ENCODE measurements at regions of chr1 and their contacts with region 1.

Region 1: GRCh38 chr1:233240829-233241682 is 54.5 kb downstream of the PCNX2 start:
- DNase-seq: peak; percentile 64 to 66
- H3K4me3 ChIP-seq: no peak overlapping the region
- H3K4me3 Mint-ChIP-seq: peak overlapping the region; percentile 33
- H3K27ac Mint-ChIP-seq: peak overlapping the region; percentile 35
- H3K4me1 ChIP-seq: peaks cover 47% of the 10 kb centered on the region
- H3K4me1 Mint-ChIP-seq: peaks cover 25% of the 10 kb centered on the region
- H3K27me3 ChIP-seq: no peaks in the 10 kb centered on the region
- H3K27me3 Mint-ChIP-seq: no peaks in the 10 kb centered on the region
- CTCF ChIP-seq: peak; percentile 57 to 83

Region 2: DNA sequence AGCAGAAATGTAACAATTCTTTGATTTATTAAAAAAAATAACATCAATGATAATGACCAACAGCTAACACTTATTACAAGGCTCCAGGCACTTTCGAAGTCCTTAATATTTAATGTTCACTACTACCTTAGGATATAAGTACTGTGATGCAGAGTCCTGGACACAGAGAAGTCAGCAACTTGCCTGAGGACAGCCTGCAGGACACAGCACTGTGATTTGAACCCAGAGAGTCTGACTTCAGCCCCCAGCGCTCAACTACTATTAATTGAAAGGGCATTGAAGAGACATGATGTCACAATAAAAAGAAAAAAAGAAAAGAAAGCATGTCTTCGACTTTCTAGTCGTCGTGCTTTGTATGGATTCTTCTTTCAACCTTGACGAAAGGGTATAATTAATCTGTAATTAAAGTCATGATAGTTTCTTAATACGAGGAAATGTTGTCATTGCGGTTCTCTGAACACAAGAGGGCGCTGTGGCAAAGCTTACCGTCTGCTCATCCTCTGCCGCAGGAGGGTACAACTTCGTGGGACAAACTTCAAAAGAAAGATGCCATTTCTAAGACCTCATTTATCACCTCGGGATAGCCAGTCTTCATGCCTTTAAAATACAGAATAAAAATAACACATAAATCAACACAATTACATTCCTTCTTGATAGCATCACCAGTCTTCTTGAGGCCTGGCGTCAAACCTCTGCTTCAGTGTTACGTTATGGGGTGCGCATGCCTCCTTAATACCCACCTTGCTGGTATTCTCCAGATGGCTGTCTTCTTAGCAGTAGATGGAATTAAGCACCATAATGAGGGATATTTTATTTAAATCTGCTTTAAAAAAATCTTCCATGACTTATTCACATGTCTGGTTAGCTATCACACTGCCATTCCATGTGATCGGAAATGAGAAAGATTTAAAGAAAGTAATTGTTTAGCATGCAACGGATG is 1374.4 kb before region 1 on chr1:
- CTCF ChIA-PET with region 1: interaction called, 4 read pairs
- POLR2A ChIA-PET with region 1: no interaction called
- intact Hi-C with region 1: loop called (anchors 5 kb)
- DNase-seq: peak; percentile 41 to 54
- H3K4me3 ChIP-seq: no peak overlapping the region
- H3K4me3 Mint-ChIP-seq: no peak overlapping the region
- H3K27ac Mint-ChIP-seq: no peak overlapping the region
- H3K4me1 ChIP-seq: no peaks in the 10 kb centered on the region
- H3K4me1 Mint-ChIP-seq: no peaks in the 10 kb centered on the region
- H3K27me3 ChIP-seq: no peaks in the 10 kb centered on the region
- H3K27me3 Mint-ChIP-seq: no peaks in the 10 kb centered on the region
- CTCF ChIP-seq: peak; percentile 80 to 93

Region 3: DNA sequence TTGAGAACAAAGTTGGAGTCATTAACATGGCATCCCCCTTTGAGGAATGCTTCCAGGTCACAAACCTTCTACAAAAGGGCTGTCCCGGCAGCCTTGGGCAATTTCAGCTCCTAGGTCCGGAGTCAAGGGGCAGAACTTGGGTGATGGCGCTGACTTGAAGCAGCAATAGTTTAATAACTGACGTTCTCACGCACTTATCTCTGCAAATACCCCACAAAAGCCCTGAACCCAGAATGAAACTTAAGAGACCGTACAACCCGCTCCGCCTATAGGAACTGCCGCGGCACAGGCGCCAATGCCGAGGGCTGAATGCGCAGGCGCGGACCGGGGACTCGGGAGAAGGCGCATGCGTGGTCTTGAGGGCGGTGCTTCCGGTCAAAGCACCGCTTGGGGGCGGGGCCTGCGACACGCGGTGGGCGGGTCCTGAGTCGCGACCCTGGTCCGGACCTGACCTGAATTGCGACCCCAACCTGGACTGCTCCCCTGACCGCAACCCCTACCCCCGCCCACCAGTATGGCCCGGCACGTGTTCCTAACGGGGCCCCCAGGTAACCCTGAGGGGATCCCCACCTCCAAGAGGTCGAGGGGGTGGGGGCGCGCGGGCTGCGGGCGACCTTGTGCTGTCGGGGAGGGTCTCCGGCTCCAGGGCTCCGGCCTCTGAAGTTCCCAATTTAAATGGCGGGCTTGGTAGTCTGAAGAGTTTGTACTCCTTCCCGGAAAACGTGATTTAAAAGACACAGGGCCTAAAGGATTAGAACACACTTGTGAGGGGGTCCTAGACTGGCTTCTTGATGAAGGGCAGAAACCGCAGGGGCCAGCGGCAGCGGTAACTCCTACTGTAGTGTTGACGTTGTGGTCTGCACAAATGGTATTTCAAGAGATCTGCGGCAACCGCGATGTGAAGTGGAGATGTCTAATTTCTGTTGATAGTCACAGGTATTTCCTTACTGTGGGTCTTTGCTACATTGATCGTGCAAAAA is 290.6 kb before region 1 on chr1 and contains the start of gene NTPCR:
- CTCF ChIA-PET with region 1: no interaction called
- POLR2A ChIA-PET with region 1: no interaction called
- intact Hi-C with region 1: loop called (anchors 1 kb)
- DNase-seq: peak; percentile 93 to 97
- H3K4me3 ChIP-seq: peak within 1 kb of the TSS; percentile 97
- H3K4me3 Mint-ChIP-seq: peak within 1 kb of the TSS; percentile 95
- H3K27ac Mint-ChIP-seq: peak within 1 kb of the TSS; percentile 91
- H3K4me1 ChIP-seq: peaks cover 8% of the 10 kb centered on the region; the same call in 1 of the 2 replicates
- H3K4me1 Mint-ChIP-seq: peaks cover 20% of the 10 kb centered on the region
- H3K27me3 ChIP-seq: no peaks in the 10 kb centered on the region
- H3K27me3 Mint-ChIP-seq: no peaks in the 10 kb centered on the region
- CTCF ChIP-seq: no peak
- total RNA-seq, gene NTPCR: 46.5 and 49.1 TPM in 2 replicates

Region 4: GRCh38 chr1:233033361-233033760 is 207.7 kb before region 1 on chr1:
- CTCF ChIA-PET with region 1: no interaction called
- POLR2A ChIA-PET with region 1: no interaction called
- intact Hi-C with region 1: loop called (anchors 2 kb)
- DNase-seq: no peak
- H3K4me3 ChIP-seq: no peak overlapping the region
- H3K4me3 Mint-ChIP-seq: no peak overlapping the region
- H3K27ac Mint-ChIP-seq: no peak overlapping the region
- H3K4me1 ChIP-seq: peaks cover 24% of the 10 kb centered on the region
- H3K4me1 Mint-ChIP-seq: peaks cover 10% of the 10 kb centered on the region
- H3K27me3 ChIP-seq: no peaks in the 10 kb centered on the region
- H3K27me3 Mint-ChIP-seq: no peaks in the 10 kb centered on the region
- CTCF ChIP-seq: no peak

Region 5: DNA sequence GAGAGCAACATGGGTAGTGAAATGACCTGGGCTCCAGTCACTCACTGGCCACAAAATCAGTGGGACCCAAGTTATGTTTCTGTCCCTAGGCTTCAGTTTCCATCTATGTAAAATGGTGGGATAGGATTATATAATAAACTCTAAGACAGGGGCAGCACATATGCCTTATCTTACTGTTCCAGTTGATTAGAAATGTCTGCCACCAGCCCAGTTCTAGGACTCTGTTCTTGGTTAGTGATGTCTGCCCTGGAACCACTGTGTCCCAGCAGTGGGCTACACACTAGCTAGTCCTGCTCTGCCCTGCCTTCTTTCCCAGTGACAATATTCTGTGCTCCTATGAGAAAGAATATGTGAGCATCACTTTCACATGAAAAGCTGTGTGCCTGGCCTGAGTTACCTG is 83.8 kb before region 1 on chr1:
- CTCF ChIA-PET with region 1: no interaction called
- POLR2A ChIA-PET with region 1: no interaction called
- intact Hi-C with region 1: loop called (anchors 2 kb)
- DNase-seq: no peak
- H3K4me3 ChIP-seq: no peak overlapping the region
- H3K4me3 Mint-ChIP-seq: no peak overlapping the region
- H3K27ac Mint-ChIP-seq: no peak overlapping the region
- H3K4me1 ChIP-seq: peaks cover 13% of the 10 kb centered on the region
- H3K4me1 Mint-ChIP-seq: peaks cover 8% of the 10 kb centered on the region
- H3K27me3 ChIP-seq: no peaks in the 10 kb centered on the region
- H3K27me3 Mint-ChIP-seq: no peaks in the 10 kb centered on the region
- CTCF ChIP-seq: no peak